AG04450 (cell line): ENCODE measurements at regions of chr9 and their contacts with region 1.

Region 1: DNA sequence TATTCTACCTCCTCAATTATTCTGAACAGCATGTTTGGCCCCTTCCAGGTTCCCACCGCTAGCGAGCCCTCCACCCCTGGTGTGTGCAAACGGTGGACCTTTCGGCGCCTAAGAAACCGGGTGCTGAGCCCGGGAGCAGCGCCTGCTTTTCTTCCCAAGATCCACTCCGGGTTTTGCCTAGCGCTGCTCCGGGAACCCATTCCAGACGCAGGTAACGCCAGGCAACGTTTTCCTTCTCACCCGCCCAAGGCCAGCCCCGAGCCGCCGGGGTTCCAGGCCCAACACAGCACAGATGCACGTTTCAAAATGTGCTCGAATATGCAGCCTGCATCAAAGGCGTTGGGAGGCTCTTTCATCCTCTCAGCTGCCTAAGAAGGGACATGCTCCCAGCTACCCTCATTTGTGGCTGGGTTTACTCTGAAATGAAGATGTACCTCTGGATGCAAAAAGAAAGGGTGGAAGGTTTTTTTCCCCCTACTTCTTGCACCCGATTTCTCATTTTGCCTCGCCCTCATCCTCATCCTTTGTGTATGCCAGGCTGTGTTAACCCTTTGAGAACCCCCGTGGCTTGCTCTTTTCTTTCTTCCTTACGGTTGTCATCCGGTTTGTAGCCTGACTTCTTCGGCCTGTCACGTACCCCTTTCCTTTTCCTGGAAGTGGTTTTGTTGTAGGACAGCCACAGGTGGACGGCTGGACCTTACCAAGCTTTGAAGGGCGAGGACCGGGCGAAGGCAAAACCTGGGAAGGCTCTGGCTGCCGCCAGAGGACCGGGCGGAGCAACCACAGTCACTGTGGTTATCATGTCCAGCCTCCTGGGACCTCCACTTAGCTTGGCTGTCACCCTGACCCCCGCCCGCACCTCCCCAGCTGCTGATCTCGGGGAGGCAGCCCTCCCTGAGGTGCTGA is 226.9 kb downstream of the SMARCA2 start:
- DNase-seq: peak; percentile 85
- H3K4me3 ChIP-seq: peak overlapping the region; percentile 65
- H3K27ac ChIP-seq: peak overlapping the region; percentile 47
- H3K27me3 ChIP-seq: peaks cover 5% of the 10 kb centered on the region
- CTCF ChIP-seq: no peak

Region 2: DNA sequence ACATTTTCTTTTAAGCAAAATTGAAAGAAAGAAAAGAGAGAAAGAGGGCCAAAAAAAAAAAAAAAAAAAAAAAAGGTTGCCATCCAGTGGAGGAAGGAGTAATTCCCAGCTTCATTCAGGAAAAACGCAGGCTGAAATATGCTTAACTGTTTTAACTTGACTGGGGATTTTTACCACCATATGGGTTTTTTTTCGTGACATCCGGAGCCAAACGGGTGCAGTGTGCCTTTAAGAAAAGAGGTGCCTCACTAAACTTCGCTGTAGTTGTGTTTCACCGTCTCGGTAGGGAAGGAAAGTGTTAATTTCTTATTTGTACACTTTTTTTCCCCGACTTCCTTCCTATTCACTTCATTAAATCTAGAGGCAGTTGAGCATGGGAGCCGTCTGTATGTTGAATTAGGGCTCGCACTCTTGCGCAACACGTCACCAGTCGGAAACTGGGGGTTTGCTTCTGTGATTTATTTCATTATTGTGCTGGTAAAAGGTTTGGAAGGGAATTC is 83.9 kb before region 1 on chr9:
- CTCF ChIA-PET with region 1: interaction called, 3 read pairs
- POLR2A ChIA-PET with region 1: interaction called, 10 read pairs
- DNase-seq: no peak
- H3K4me3 ChIP-seq: peak overlapping the region; percentile 64
- H3K27ac ChIP-seq: peak overlapping the region; percentile 76
- H3K27me3 ChIP-seq: no peaks in the 10 kb centered on the region
- CTCF ChIP-seq: 0 out of 2 replicates have a peak, but pooled peaks have one; percentile 22

Region 3: DNA sequence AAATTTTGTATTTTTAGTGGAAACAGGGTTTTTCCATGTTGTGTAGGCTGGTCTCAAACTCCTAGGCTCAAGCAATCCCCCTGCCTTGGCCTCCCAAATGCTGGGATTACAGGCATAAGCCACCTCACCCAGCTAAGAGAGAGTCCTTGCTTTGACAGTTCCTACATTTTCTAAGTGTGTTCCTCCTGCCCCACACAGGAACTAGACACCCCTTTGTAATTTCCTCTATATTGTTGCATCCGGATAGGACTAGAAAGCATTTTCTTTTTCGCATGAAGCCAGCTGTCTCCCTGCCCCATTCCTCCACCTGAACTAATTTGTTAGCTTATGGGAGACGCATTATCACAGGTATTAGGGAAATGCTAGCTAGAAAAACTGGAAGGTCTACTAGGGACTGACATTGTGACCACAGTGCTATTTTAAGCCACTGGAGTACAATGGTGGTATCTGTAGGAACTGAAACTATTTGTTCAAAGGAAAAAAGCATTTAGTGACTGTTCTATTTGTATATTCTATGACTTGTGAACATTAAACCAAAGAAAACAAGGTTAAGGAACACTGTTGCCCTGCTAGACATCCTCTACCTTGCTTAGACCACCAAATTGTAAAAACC is 12.9 kb before region 1 on chr9:
- CTCF ChIA-PET with region 1: interaction called, 10 read pairs
- POLR2A ChIA-PET with region 1: no interaction called
- DNase-seq: no peak
- H3K4me3 ChIP-seq: no peak overlapping the region
- H3K27ac ChIP-seq: no peak overlapping the region
- H3K27me3 ChIP-seq: no peaks in the 10 kb centered on the region
- CTCF ChIP-seq: no peak

Region 4: GRCh38 chr9:2307480-2307879 is 65.4 kb after region 1 on chr9:
- CTCF ChIA-PET with region 1: no interaction called
- POLR2A ChIA-PET with region 1: no interaction called
- DNase-seq: peak; percentile 1
- H3K4me3 ChIP-seq: no peak overlapping the region
- H3K27ac ChIP-seq: no peak overlapping the region
- H3K27me3 ChIP-seq: no peaks in the 10 kb centered on the region
- CTCF ChIP-seq: no peak